ENCODE measurements at regions of chr7 and their contacts with region 1.

Region 1: GRCh38 chr7:4706384-4707216 is 24.5 kb downstream of the FOXK1 start:
- DNase-seq: peak; percentile 79
- H3K4me3 ChIP-seq: peak overlapping the region in 2 of 3 experiments; percentile 3 to 31
- H3K27ac ChIP-seq: peak overlapping the region; percentile 98
- H3K4me1 ChIP-seq: peaks cover 38% of the 10 kb centered on the region
- H3K27me3 ChIP-seq: no peaks in the 10 kb centered on the region
- CTCF ChIP-seq: no peak
- POLR2A ChIP-seq: no peak

Region 2: DNA sequence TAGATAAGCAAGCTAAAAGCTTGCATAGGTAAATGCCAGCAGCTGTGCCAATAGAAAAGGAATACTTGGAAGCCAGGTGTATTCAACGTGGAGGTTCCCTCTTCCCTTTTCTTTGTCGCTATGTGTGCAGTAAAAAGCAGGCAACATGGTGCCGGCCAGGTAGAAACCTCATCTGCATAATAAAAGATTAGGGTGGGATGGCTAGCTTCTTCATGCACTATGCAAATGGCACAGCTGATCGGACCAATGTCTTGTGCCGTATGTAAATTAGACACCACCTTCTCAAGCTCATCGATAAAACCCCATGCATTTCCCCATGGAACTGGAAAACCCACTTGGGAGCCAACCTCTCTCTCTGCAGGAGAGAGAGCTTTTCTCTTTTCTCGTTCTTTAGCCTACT is 175.4 kb before region 1 on chr7:
- CTCF ChIA-PET with region 1: no interaction called
- POLR2A ChIA-PET with region 1: no interaction called
- dilution Hi-C with region 1: no loop called
- intact Hi-C with region 1: no loop called
- DNase-seq: no peak
- H3K4me3 ChIP-seq: no peak overlapping the region
- H3K27ac ChIP-seq: no peak overlapping the region
- H3K4me1 ChIP-seq: no peaks in the 10 kb centered on the region
- H3K27me3 ChIP-seq: no peaks in the 10 kb centered on the region
- CTCF ChIP-seq: no peak
- POLR2A ChIP-seq: no peak

Region 3: GRCh38 chr7:4744391-4745264 is 38.0 kb after region 1 on chr7:
- CTCF ChIA-PET with region 1: no interaction called
- POLR2A ChIA-PET with region 1: interaction called, 6 read pairs
- dilution Hi-C with region 1: no loop called
- intact Hi-C with region 1: loop called (anchors 1 kb)
- DNase-seq: peak; percentile 96
- H3K4me3 ChIP-seq: no peak overlapping the region
- H3K27ac ChIP-seq: peak overlapping the region; percentile 76
- H3K4me1 ChIP-seq: peaks cover 49% of the 10 kb centered on the region
- H3K27me3 ChIP-seq: no peaks in the 10 kb centered on the region
- CTCF ChIP-seq: no peak
- POLR2A ChIP-seq: no peak